Tibial artery (tissue), 4 donors: ENCODE measurements at regions of chr2 and their contacts with region 1.

Region 1: DNA sequence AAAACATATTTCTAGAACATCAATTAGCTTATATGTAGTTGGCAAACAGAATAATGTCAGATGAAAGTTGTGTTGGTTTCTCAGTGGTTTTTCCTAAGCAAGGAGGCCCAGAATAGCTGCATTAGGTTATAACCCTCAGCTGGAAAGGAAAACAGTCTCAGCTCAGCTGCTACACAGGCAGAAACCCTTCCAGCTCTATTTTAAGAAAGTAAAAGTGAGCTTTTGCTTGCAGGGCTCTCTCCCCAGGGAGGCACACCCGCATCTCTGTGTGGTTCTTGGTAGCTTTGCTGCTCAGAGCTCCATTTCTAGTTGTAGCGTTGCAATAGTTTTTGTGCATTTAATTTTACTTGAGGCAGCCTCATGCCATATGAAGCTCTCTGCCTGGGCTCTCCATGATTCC is 54.6 kb downstream of the PIKFYVE start:
- DNase-seq: peak; percentile 82 to 91
- H3K4me3 ChIP-seq: peak overlapping the region in 1 of 2 donors; percentile 7
- H3K27ac ChIP-seq: peak overlapping the region; percentile 73 to 78
- H3K4me1 ChIP-seq: peaks cover 0 to 47% (median 21%) of the 10 kb centered on the region in 4 donors
- H3K27me3 ChIP-seq: no peaks in the 10 kb centered on the region
- CTCF ChIP-seq: no peak

Region 2: DNA sequence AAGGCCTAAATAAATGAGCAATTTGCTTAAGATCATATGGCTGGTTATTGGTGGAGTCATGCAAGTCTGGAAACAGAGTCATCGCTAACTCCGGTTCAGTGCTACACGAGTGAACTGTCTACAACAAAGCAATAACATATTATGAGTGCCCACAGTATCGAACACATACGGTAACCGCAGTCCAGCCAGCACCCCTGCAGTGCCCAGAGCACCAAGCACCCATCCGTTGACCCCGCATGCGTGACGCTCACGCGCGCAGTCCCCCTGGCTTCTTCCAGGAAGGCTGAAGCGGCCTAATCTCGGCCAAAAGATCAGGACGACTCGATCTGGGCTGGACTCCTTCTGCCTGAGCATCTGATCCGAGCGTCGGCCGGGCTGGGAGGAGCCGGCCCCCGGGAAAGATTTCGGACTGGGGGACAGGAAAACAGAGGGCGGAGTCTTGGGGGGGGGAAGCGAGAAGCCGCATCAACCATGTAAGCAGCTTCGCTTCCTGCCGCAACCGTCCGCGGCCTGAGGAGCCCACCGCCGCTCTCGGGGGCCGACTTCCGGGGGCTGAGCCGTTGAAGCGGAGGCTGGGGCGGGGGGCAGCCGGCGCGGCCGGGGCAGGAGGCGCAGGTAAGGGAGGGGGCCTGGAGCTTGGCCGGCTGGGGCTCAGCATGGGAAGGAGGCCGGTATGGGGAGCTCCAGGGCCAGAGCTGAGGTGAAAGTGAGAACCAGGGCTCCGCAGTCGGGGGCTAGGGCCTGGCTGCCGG is 54.7 kb before region 1 on chr2 and contains the start of gene PIKFYVE:
- intact Hi-C with region 1: loop called (anchors 5 kb)
- DNase-seq: peak; percentile 96 to 98
- H3K4me3 ChIP-seq: peak within 1 kb of the TSS; percentile 84 to 99
- H3K27ac ChIP-seq: peak within 1 kb of the TSS; percentile 96 to 98
- H3K4me1 ChIP-seq: peaks cover 0 to 38% (median 24%) of the 10 kb centered on the region in 4 donors
- H3K27me3 ChIP-seq: no peaks in the 10 kb centered on the region
- CTCF ChIP-seq: peak in 1 of 2 experiments; percentile 13

Region 3: GRCh38 chr2:208356846-208357574 is 36.3 kb after region 1 on chr2:
- intact Hi-C with region 1: no loop called
- DNase-seq: no peak
- H3K4me3 ChIP-seq: no peak overlapping the region
- H3K27ac ChIP-seq: peak overlapping the region; percentile 8 to 24
- H3K4me1 ChIP-seq: peaks cover 0 to 5% (median 0%) of the 10 kb centered on the region in 4 donors
- H3K27me3 ChIP-seq: no peaks in the 10 kb centered on the region
- CTCF ChIP-seq: no peak

Region 4: GRCh38 chr2:208556983-208557484 is 236.3 kb after region 1 on chr2:
- intact Hi-C with region 1: no loop called
- DNase-seq: no peak
- H3K4me3 ChIP-seq: no peak overlapping the region
- H3K27ac ChIP-seq: no peak overlapping the region
- H3K4me1 ChIP-seq: no peaks in the 10 kb centered on the region
- H3K27me3 ChIP-seq: no peaks in the 10 kb centered on the region
- CTCF ChIP-seq: no peak